Activated naive CD4-positive, alpha-beta T cell treated with anti-CD3 and anti-CD28 coated beads, Interleukin-2, amount 10 ng/mL, durations not matched to agents 7 days and 5 days (primary cell): ENCODE measurements at regions of chr1 and their contacts with region 1.

Region 1: DNA sequence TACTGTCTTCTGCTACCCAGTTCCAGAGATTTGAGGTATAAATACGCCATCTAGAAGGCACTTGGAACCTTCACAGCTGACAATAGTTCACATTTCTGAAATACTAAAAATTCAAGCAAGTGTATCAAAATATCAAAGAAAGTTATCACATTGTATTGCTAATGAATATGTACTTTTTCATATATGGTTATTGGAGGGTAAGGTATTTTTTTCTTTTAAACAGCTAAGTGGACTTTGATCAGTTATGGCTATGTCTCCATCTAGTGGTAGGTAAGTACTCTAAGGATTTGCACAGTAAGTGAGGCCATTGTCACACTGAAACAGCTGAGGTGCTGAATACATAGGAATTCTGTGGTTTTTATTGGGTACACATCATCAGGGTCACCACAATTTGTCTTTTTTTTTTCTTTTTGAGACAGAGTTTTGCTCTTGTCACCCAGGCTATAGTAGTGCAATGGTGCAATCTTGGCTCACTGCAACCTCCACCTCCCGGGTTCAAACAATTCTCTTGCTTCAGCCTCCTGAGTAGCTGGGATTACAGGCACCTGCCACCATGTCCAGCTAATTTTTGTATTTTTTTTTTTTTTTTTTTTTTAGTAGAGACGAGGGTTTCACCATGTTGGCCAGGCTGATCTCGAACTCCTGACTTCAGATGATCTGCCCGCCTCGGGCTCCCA is 49.1 kb upstream of the CR2 start:
- DNase-seq: no peak
- H3K4me3 Mint-ChIP-seq: no peak overlapping the region
- H3K27ac Mint-ChIP-seq: no peak overlapping the region
- H3K4me1 Mint-ChIP-seq: peaks cover 4% of the 10 kb centered on the region
- H3K27me3 Mint-ChIP-seq: peaks cover 5% of the 10 kb centered on the region

Region 2: GRCh38 chr1:207077470-207078377 is 327.3 kb before region 1 on chr1:
- CTCF ChIA-PET with region 1: interaction called, 84 read pairs
- DNase-seq: peak; percentile 78
- H3K4me3 Mint-ChIP-seq: no peak overlapping the region
- H3K27ac Mint-ChIP-seq: no peak overlapping the region
- H3K4me1 Mint-ChIP-seq: peaks cover 5% of the 10 kb centered on the region
- H3K27me3 Mint-ChIP-seq: peaks cover 15% of the 10 kb centered on the region

Region 3: GRCh38 chr1:207084701-207085180 is 320.2 kb before region 1 on chr1:
- CTCF ChIA-PET with region 1: interaction called, 84 read pairs
- DNase-seq: peak; percentile 68
- H3K4me3 Mint-ChIP-seq: no peak overlapping the region
- H3K27ac Mint-ChIP-seq: no peak overlapping the region
- H3K4me1 Mint-ChIP-seq: peaks cover 34% of the 10 kb centered on the region
- H3K27me3 Mint-ChIP-seq: peaks cover 13% of the 10 kb centered on the region

Region 4: DNA sequence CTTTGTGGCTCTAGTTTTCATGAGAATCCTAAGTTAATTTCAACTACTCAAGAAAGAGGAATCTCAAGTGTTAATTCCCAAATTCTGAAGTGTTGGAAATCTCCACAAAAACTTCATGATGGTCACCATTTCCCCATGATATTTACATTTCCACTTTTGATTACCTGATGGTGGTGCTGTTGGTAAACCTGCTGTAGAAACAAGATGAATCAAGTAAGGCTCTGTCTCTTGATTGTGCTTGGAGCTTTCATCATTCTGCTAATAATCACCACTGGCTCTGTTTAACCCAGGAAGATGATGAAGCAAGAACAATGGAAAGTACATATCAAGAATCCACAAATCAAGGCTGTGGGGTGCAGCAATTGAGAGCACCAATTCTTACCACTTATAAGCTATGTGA is 223.1 kb before region 1 on chr1:
- CTCF ChIA-PET with region 1: interaction called, 12 read pairs
- DNase-seq: no peak
- H3K4me3 Mint-ChIP-seq: no peak overlapping the region
- H3K27ac Mint-ChIP-seq: no peak overlapping the region
- H3K4me1 Mint-ChIP-seq: no peaks in the 10 kb centered on the region
- H3K27me3 Mint-ChIP-seq: no peaks in the 10 kb centered on the region

Region 5: DNA sequence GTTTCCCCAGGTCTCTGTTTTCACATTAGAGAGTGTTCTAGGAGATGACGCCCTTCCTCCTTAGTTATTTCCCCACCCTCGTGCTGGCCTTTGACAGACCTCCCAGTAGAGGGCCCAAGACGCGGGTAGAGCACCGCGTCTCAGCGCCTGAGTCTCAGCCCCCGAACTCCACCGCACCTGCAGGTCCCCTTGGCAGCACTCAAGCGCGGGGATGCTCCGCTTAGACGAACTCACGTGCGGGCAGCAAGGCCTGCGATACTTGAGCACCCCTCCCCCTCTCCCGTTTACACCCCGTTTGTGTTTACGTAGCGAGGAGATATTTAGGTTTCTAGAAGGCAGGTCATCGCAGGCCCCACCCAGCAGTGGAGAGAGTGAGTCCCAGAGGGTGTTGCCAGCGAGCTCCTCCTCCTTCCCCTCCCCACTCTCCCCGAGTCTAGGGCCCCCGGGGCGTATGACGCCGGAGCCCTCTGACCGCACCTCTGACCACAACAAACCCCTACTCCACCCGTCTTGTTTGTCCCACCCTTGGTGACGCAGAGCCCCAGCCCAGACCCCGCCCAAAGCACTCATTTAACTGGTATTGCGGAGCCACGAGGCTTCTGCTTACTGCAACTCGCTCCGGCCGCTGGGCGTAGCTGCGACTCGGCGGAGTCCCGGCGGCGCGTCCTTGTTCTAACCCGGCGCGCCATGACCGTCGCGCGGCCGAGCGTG is 83.8 kb before region 1 on chr1 and contains the start of gene CD55:
- CTCF ChIA-PET with region 1: interaction called, 35 read pairs
- DNase-seq: peak; percentile 100
- H3K4me3 Mint-ChIP-seq: peak within 1 kb of the TSS; percentile 96
- H3K27ac Mint-ChIP-seq: peak within 1 kb of the TSS; percentile 100
- H3K4me1 Mint-ChIP-seq: peaks cover 46% of the 10 kb centered on the region
- H3K27me3 Mint-ChIP-seq: peaks cover 7% of the 10 kb centered on the region

Region 6: GRCh38 chr1:207374887-207375286 is 30.1 kb before region 1 on chr1:
- CTCF ChIA-PET with region 1: no interaction called
- DNase-seq: no peak
- H3K4me3 Mint-ChIP-seq: no peak overlapping the region
- H3K27ac Mint-ChIP-seq: no peak overlapping the region
- H3K4me1 Mint-ChIP-seq: no peaks in the 10 kb centered on the region
- H3K27me3 Mint-ChIP-seq: no peaks in the 10 kb centered on the region

Region 7: GRCh38 chr1:207499573-207499972 is 94.6 kb after region 1 on chr1:
- CTCF ChIA-PET with region 1: interaction called, 22 read pairs
- DNase-seq: peak; percentile 84
- H3K4me3 Mint-ChIP-seq: no peak overlapping the region
- H3K27ac Mint-ChIP-seq: no peak overlapping the region
- H3K4me1 Mint-ChIP-seq: peaks cover 13% of the 10 kb centered on the region
- H3K27me3 Mint-ChIP-seq: peaks cover 42% of the 10 kb centered on the region

Region 8: DNA sequence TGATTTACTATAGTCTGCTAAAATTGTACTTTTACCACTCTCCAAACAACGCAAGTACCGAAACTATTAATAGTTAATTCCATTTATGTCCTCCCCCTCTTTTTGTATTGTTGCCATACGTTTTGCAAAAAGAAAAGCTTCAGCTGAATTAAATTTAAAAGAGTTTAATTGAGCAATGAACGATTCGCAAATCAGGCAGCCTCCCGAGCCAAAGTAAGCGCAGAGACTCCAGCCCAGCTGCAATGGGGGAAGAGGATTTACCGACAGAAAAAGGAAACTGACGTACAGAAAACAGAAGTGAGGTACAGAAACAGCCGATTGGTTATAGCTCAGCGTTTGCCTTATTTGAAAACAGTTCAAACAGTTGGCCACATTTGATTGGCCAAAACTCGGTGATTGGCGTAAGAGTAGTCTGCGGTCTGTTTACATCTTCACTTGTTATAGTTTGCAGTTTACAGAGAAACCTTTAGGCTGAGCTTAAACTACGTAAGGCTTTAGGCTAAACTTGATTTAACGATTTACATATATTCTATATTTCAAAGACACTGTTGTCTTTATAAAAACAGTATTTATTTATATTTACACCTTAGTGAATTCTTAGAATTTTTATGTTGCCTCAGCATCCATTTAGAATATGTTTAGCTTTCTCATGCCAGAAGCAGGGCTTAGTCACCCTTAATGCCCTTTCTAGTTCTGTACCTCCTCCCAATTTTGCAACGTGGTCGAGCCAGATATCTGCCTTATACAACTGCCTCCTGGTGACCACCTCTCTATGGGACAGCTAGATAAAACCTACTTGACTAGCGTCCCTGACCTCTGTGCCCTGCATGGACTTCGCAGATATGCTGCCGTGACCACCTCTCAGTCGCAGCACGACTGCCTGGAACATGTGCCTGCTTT is 114.8 kb after region 1 on chr1:
- CTCF ChIA-PET with region 1: no interaction called
- DNase-seq: no peak
- H3K4me3 Mint-ChIP-seq: no peak overlapping the region
- H3K27ac Mint-ChIP-seq: no peak overlapping the region
- H3K4me1 Mint-ChIP-seq: no peaks in the 10 kb centered on the region
- H3K27me3 Mint-ChIP-seq: peaks cover 13% of the 10 kb centered on the region